GM12878 (cell line): ENCODE measurements at regions of chr6 and their contacts with region 1.

Region 1: DNA sequence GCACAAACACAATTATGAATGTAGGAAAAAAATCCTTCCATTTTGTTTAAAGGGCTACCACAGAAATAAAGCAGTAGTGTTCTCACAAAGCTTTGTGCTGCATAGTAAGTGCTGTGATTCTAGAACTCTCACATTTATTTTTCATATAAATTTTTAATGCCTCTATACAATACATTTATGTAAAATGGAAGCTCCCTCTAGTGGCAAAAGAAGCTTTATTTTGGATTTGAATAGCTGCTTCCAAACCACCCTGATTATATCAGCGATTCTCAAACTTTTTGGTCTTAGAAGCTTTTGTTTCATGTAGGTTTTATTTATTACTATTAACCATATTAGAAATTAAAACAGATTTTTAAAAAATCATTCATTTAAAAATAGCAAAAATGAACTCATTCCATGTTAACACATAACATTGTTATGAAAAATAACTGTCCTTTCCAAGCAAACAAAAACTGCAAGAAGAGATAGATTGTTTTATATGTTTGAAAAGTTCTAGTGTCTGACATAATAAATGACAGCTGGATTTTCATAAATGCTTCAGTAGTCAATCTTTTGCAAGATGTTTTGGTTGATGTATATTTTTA is 38.4 kb downstream of the HS3ST5 start:
- DNase-seq: no peak
- ATAC-seq: peak; percentile 45; the same call in 1 of the 3 replicates
- H3K4me3 ChIP-seq: no peak overlapping the region
- H3K27ac ChIP-seq: no peak overlapping the region
- H3K4me1 ChIP-seq: no peaks in the 10 kb centered on the region
- H3K27me3 ChIP-seq: no peaks in the 10 kb centered on the region
- CTCF ChIP-seq: peak; percentile 34 to 40 (median 36)
- EP300 ChIP-seq: no peak
- POLR2A ChIP-seq: no peak
- RAD21 ChIP-seq: no peak

Region 2: GRCh38 chr6:114096561-114097172 is 207.7 kb before region 1 on chr6:
- CTCF ChIA-PET with region 1: interaction called, 6 read pairs
- POLR2A ChIA-PET with region 1: no interaction called
- RAD21 ChIA-PET with region 1: no interaction called
- SMC1A ChIA-PET with region 1: interaction called, 5 read pairs
- in situ Hi-C with region 1: no loop called
- intact Hi-C with region 1: loop called (anchors 5 kb)
- DNase-seq: no peak
- ATAC-seq: peak; percentile 63
- H3K4me3 ChIP-seq: no peak overlapping the region
- H3K27ac ChIP-seq: no peak overlapping the region
- H3K4me1 ChIP-seq: no peaks in the 10 kb centered on the region
- H3K27me3 ChIP-seq: no peaks in the 10 kb centered on the region
- CTCF ChIP-seq: peak; percentile 53 to 66 (median 62)
- EP300 ChIP-seq: no peak
- POLR2A ChIP-seq: no peak
- RAD21 ChIP-seq: peak; percentile 71

Region 3: DNA sequence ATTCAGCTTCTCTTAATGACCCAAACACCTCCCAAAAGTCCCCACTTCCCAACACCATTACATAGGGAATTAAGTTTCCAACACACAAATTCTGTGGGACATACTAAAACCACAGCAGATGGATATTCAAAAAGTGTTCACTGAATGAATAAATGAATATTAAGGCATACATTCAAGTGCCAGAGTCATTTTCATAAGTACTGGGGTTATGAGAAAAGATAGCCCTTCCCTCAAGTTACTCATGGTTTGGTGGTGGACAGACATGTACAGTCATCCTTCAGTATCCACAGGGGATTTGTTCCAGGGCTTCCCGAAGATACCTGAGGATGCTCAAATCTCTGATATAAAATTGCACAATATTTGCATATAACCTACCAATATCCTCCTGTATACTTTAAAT is 12.0 kb before region 1 on chr6:
- CTCF ChIA-PET with region 1: interaction called, 17 read pairs
- POLR2A ChIA-PET with region 1: no interaction called
- RAD21 ChIA-PET with region 1: no interaction called
- SMC1A ChIA-PET with region 1: no interaction called
- in situ Hi-C with region 1: no loop called
- intact Hi-C with region 1: no loop called
- DNase-seq: no peak
- ATAC-seq: no peak
- H3K4me3 ChIP-seq: no peak overlapping the region
- H3K27ac ChIP-seq: no peak overlapping the region
- H3K4me1 ChIP-seq: no peaks in the 10 kb centered on the region
- H3K27me3 ChIP-seq: no peaks in the 10 kb centered on the region
- CTCF ChIP-seq: no peak
- EP300 ChIP-seq: no peak
- POLR2A ChIP-seq: no peak
- RAD21 ChIP-seq: no peak

Region 4: DNA sequence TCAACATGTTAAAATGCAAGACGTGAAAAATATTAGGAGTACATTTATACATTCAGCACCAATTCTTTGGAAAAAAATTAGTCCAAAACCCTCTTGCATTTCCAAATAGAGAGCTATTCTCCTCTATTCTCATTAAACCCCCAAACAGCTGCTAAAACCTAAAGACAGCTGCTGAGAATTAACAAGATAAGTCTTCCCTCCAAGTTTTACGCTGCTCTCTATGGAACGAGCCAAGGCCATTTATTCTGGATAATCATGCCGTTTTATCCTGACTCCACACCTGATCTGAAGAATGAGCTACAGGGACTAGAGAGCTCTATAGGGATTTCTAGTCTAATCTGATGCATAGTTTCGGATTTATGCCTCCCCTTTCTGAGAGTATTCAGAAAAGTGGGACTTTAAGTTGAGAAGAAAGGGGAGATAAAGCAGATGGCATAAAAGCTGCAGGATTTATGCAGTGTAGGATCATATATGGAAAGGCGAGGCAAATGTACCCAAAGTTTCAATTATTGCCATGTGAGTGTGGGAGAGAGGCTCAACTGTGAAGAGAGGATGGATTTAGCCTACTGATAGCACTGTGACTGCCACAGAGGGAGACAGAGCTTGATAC is 103.1 kb after region 1 on chr6:
- CTCF ChIA-PET with region 1: no interaction called
- POLR2A ChIA-PET with region 1: no interaction called
- RAD21 ChIA-PET with region 1: no interaction called
- SMC1A ChIA-PET with region 1: no interaction called
- in situ Hi-C with region 1: no loop called
- intact Hi-C with region 1: no loop called
- DNase-seq: no peak
- ATAC-seq: no peak
- H3K4me3 ChIP-seq: no peak overlapping the region
- H3K27ac ChIP-seq: no peak overlapping the region
- H3K4me1 ChIP-seq: no peaks in the 10 kb centered on the region
- H3K27me3 ChIP-seq: no peaks in the 10 kb centered on the region
- CTCF ChIP-seq: no peak
- EP300 ChIP-seq: no peak
- POLR2A ChIP-seq: no peak
- RAD21 ChIP-seq: no peak